GM12878 (cell line): ENCODE measurements at regions of chr2 and their contacts with region 1.

Region 1: GRCh38 chr2:96260404-96261260 is 5.2 kb downstream of the TMEM127 start:
- DNase-seq: no peak
- ATAC-seq: peak; percentile 78
- H3K4me3 ChIP-seq: no peak overlapping the region
- H3K27ac ChIP-seq: peak overlapping the region; percentile 45
- H3K4me1 ChIP-seq: peaks cover 32% of the 10 kb centered on the region
- H3K27me3 ChIP-seq: no peaks in the 10 kb centered on the region
- CTCF ChIP-seq: peak; percentile 60 to 74 (median 72)
- EP300 ChIP-seq: no peak
- POLR2A ChIP-seq: no peak
- RAD21 ChIP-seq: peak; percentile 39; the same call in 1 of the 2 replicates

Region 2: GRCh38 chr2:96138179-96139145 is 122.2 kb before region 1 on chr2 and contains the start of gene ASTL:
- CTCF ChIA-PET with region 1: interaction called, 23 read pairs
- POLR2A ChIA-PET with region 1: interaction called, 4 read pairs
- RAD21 ChIA-PET with region 1: interaction called, 13 read pairs
- SMC1A ChIA-PET with region 1: interaction called, 19 read pairs
- in situ Hi-C with region 1: loop called (anchors 5 kb)
- intact Hi-C with region 1: loop called (anchors 2 kb)
- DNase-seq: no peak
- ATAC-seq: peak; percentile 37
- H3K4me3 ChIP-seq: no peak within 1 kb of the TSS
- H3K27ac ChIP-seq: no peak within 1 kb of the TSS
- H3K4me1 ChIP-seq: peaks cover 13% of the 10 kb centered on the region
- H3K27me3 ChIP-seq: no peaks in the 10 kb centered on the region; a peak in 1 of 4 replicates
- CTCF ChIP-seq: peak; percentile 67 to 92 (median 71)
- EP300 ChIP-seq: no peak
- POLR2A ChIP-seq: no peak
- RAD21 ChIP-seq: peak; percentile 92
- polyA plus RNA-seq, gene ASTL: not detected

Region 3: GRCh38 chr2:96145036-96145847 is 115.4 kb before region 1 on chr2 and contains the start of gene DUSP2:
- CTCF ChIA-PET with region 1: interaction called, 15 read pairs
- POLR2A ChIA-PET with region 1: no interaction called
- RAD21 ChIA-PET with region 1: interaction called, 4 read pairs
- SMC1A ChIA-PET with region 1: interaction called, 19 read pairs
- in situ Hi-C with region 1: loop called (anchors 5 kb)
- intact Hi-C with region 1: no loop called
- DNase-seq: peak; percentile 85
- ATAC-seq: peak; percentile 62
- H3K4me3 ChIP-seq: peak within 1 kb of the TSS; percentile 92
- H3K27ac ChIP-seq: peak within 1 kb of the TSS; percentile 89
- H3K4me1 ChIP-seq: peaks cover 45% of the 10 kb centered on the region
- H3K27me3 ChIP-seq: no peaks in the 10 kb centered on the region
- CTCF ChIP-seq: no peak
- EP300 ChIP-seq: peak in 1 of 2 experiments; percentile 36; a peak in 3 of 4 replicates
- POLR2A ChIP-seq: no peak
- RAD21 ChIP-seq: 0 out of 2 replicates have a peak, but pooled peaks have one; percentile 22
- polyA plus RNA-seq, gene DUSP2: 9.7 to 34.6 TPM

Region 4: DNA sequence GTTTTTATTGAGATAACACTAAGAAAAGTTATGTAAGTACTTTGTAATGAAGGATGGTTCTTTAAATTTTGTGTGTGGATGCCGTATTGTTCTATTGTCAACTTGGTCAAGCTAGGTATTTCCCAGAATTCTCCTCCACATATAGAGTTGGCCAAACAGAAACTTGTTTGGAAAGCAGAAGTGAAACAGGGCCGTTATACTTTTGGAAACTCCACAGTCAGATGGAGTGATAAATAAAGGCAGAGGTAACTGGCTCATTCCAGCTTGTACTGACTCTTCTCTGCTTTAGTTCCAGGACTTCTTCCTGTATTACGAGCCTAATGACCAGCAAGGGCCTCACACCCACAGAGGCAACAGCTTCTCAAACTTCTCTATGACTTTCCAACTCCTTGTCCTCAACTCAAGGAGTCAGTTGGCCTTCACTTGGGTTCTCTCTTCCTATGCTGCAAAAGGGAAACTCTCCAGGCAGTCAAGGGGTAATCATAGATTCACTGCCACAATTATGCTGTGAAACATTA is 35.6 kb before region 1 on chr2:
- CTCF ChIA-PET with region 1: interaction called, 11 read pairs
- POLR2A ChIA-PET with region 1: interaction called, 4 read pairs
- RAD21 ChIA-PET with region 1: interaction called, 3 read pairs
- SMC1A ChIA-PET with region 1: interaction called, 3 read pairs
- in situ Hi-C with region 1: no loop called
- intact Hi-C with region 1: loop called (anchors 5 kb)
- DNase-seq: peak; percentile 74
- ATAC-seq: peak; percentile 94
- H3K4me3 ChIP-seq: no peak overlapping the region
- H3K27ac ChIP-seq: peak overlapping the region; percentile 94
- H3K4me1 ChIP-seq: peaks cover 17% of the 10 kb centered on the region
- H3K27me3 ChIP-seq: no peaks in the 10 kb centered on the region
- CTCF ChIP-seq: no peak
- EP300 ChIP-seq: peak; percentile 73 to 85; a peak in 3 of 4 replicates
- POLR2A ChIP-seq: peak; percentile 59; the same call in 1 of the 2 replicates
- RAD21 ChIP-seq: no peak

Region 5: DNA sequence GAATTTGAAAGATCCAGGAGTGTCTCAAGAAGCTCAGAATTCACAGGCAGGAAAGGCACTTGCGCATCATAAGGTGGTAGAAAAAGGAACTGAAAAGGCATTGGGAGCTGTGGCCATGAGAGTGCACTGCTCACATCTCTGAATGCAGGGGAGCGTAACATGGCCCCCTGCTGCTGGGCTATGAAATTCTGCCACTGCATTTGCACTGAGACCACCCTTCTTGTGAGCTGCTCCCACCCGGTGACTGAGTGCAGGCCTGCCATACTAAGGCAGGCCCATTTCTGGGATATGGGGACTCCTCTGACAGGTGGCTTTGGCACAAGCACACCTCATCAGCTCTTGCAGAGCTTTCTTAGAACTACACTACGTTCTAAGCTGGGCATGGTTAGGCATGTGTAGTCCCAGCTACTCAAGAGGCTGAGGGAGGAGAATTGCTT is 26.7 kb before region 1 on chr2:
- CTCF ChIA-PET with region 1: interaction called, 51 read pairs
- POLR2A ChIA-PET with region 1: interaction called, 11 read pairs
- RAD21 ChIA-PET with region 1: interaction called, 8 read pairs
- SMC1A ChIA-PET with region 1: interaction called, 48 read pairs
- in situ Hi-C with region 1: no loop called
- intact Hi-C with region 1: loop called (anchors 5 kb)
- DNase-seq: peak; percentile 68
- ATAC-seq: peak; percentile 99
- H3K4me3 ChIP-seq: no peak overlapping the region
- H3K27ac ChIP-seq: peak overlapping the region; percentile 50
- H3K4me1 ChIP-seq: peaks cover 21% of the 10 kb centered on the region
- H3K27me3 ChIP-seq: no peaks in the 10 kb centered on the region
- CTCF ChIP-seq: peak; percentile 44 to 51 (median 46); a peak in 5 of 6 replicates
- EP300 ChIP-seq: peak in 1 of 2 experiments; percentile 51; a peak in 1 of 4 replicates
- POLR2A ChIP-seq: no peak
- RAD21 ChIP-seq: peak; percentile 48

Region 6: DNA sequence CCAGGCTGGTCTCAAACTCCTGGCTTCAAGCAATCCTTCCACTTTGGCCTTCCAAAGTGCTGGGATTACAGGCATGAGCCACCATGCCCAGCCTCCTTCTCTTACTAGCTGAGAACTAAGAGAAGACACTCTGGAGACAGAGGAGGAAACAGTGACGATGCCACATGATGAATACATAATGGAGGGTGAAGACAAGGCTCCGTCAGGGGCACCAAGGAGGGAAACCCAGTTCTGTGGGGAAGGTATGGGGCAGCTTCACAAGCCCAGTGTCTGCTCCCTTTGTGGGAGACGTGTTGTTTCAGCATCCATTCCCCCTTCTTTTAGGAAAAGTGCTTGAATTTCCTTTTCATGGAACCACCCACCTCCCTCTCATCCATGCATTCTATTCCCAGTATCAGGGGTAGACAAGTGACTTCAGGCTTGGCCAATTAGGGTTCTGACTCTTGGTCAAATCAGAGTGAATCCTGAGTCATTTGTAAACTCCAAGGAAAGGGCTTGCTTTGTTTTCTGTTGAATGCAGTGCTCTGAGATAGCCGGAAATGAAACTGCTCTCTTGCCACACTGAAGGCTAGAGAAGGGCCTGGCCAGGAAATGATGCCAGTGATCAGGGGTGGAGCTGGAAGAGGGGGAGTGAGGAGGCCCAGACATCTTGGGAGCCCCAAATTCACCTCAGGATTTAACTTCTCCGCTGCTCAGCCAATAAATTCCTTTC is 18.6 kb before region 1 on chr2:
- CTCF ChIA-PET with region 1: interaction called, 18 read pairs
- POLR2A ChIA-PET with region 1: interaction called, 8 read pairs
- RAD21 ChIA-PET with region 1: interaction called, 3 read pairs
- SMC1A ChIA-PET with region 1: interaction called, 10 read pairs
- in situ Hi-C with region 1: no loop called
- intact Hi-C with region 1: no loop called
- DNase-seq: peak; percentile 78
- ATAC-seq: peak; percentile 98
- H3K4me3 ChIP-seq: peak overlapping the region; percentile 24; the same call in 1 of the 2 replicates
- H3K27ac ChIP-seq: peak overlapping the region; percentile 89
- H3K4me1 ChIP-seq: peaks cover 32% of the 10 kb centered on the region
- H3K27me3 ChIP-seq: no peaks in the 10 kb centered on the region
- CTCF ChIP-seq: no peak
- EP300 ChIP-seq: peak in 1 of 2 experiments; percentile 64; a peak in 1 of 4 replicates
- POLR2A ChIP-seq: peak; percentile 34; the same call in 1 of the 2 replicates
- RAD21 ChIP-seq: 0 out of 2 replicates have a peak, but pooled peaks have one; percentile 17

Region 7: GRCh38 chr2:96249654-96250053 is 11.0 kb before region 1 on chr2:
- CTCF ChIA-PET with region 1: interaction called, 12 read pairs
- POLR2A ChIA-PET with region 1: interaction called, 8 read pairs
- RAD21 ChIA-PET with region 1: interaction called, 3 read pairs
- SMC1A ChIA-PET with region 1: interaction called, 10 read pairs
- in situ Hi-C with region 1: no loop called
- intact Hi-C with region 1: no loop called
- DNase-seq: no peak
- ATAC-seq: no peak
- H3K4me3 ChIP-seq: no peak overlapping the region
- H3K27ac ChIP-seq: no peak overlapping the region
- H3K4me1 ChIP-seq: peaks cover 9% of the 10 kb centered on the region
- H3K27me3 ChIP-seq: no peaks in the 10 kb centered on the region
- CTCF ChIP-seq: no peak
- EP300 ChIP-seq: no peak
- POLR2A ChIP-seq: peak; percentile 49; the same call in 1 of the 2 replicates
- RAD21 ChIP-seq: no peak

Region 8: GRCh38 chr2:96287273-96287856 is 26.7 kb after region 1 on chr2:
- CTCF ChIA-PET with region 1: no interaction called
- POLR2A ChIA-PET with region 1: no interaction called
- RAD21 ChIA-PET with region 1: no interaction called
- SMC1A ChIA-PET with region 1: no interaction called
- in situ Hi-C with region 1: no loop called
- intact Hi-C with region 1: no loop called
- DNase-seq: no peak
- ATAC-seq: peak; percentile 46
- H3K4me3 ChIP-seq: no peak overlapping the region
- H3K27ac ChIP-seq: no peak overlapping the region
- H3K4me1 ChIP-seq: no peaks in the 10 kb centered on the region
- H3K27me3 ChIP-seq: no peaks in the 10 kb centered on the region
- CTCF ChIP-seq: no peak
- EP300 ChIP-seq: no peak
- POLR2A ChIP-seq: peak; percentile 39; the same call in 1 of the 2 replicates
- RAD21 ChIP-seq: no peak